PC-9 (cell line): ENCODE measurements at regions of chr1 and their contacts with region 1.

Region 1: DNA sequence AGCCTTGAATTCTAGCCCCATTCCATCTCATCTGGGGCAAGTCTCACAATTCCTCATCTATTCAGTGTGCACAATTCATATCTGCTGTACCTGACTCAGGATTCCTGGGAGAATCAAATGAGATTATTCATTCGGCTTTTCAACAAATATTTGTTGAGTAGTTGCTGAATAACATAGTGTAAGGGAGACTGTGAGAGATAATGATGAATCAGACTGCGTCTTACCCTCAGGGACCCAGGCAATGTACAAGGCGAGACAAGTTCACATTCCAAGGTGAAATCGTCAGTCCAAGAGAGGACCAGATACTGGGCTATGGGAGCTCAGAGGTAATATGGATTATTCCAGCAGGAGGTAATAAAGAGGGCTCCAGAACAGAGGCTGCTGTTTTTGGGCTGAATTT is 67.8 kb upstream of the SMYD2 start:
- DNase-seq: peak; percentile 18 to 87
- H3K4me3 ChIP-seq: no peak overlapping the region
- H3K27ac ChIP-seq: peak overlapping the region; percentile 15; the same call in 1 of the 2 replicates
- H3K4me1 ChIP-seq: peaks cover 56% of the 10 kb centered on the region
- H3K27me3 ChIP-seq: no peaks in the 10 kb centered on the region
- CTCF ChIP-seq: no peak

Region 2: GRCh38 chr1:213075725-213076124 is 1137.4 kb before region 1 on chr1:
- CTCF ChIA-PET with region 1: no interaction called
- POLR2A ChIA-PET with region 1: no interaction called
- intact Hi-C with region 1: no loop called
- DNase-seq: no peak
- H3K4me3 ChIP-seq: no peak overlapping the region
- H3K27ac ChIP-seq: no peak overlapping the region
- H3K4me1 ChIP-seq: no peaks in the 10 kb centered on the region
- H3K27me3 ChIP-seq: no peaks in the 10 kb centered on the region
- CTCF ChIP-seq: no peak

Region 3: DNA sequence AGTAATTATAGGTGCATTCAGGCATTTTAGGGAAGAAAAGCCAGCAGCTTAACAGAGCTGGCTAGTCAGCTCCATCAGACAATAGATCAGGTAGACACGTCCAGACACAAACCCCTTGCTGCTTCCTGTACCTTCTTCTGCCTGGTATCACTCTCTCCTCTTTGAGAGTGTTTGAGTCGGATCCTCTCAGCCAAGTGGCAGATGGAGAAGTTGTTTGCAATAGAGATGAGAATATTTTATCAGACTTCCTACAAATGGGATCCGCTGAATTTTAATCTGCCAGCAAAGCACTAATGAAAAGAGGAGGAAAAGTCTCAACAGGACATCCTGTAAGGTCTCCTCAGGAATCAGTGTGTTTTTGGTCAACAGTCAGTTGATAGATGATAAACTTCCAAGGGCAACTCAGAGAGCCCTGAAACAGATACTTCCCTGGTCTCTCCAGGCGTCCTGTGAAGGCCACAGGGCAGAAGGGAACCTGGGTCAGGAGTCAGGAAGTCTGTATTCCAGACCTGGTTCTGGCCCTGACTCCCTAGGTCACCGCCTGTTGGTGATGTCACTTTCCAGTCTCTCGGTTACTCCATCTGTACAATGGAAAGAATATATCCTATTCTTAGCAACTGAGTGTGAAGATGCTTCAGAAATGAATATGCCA is 287.5 kb before region 1 on chr1:
- CTCF ChIA-PET with region 1: no interaction called
- POLR2A ChIA-PET with region 1: no interaction called
- intact Hi-C with region 1: no loop called
- DNase-seq: no peak
- H3K4me3 ChIP-seq: no peak overlapping the region
- H3K27ac ChIP-seq: no peak overlapping the region
- H3K4me1 ChIP-seq: no peaks in the 10 kb centered on the region
- H3K27me3 ChIP-seq: no peaks in the 10 kb centered on the region; the same call in 1 of the 2 replicates
- CTCF ChIP-seq: no peak

Region 4: DNA sequence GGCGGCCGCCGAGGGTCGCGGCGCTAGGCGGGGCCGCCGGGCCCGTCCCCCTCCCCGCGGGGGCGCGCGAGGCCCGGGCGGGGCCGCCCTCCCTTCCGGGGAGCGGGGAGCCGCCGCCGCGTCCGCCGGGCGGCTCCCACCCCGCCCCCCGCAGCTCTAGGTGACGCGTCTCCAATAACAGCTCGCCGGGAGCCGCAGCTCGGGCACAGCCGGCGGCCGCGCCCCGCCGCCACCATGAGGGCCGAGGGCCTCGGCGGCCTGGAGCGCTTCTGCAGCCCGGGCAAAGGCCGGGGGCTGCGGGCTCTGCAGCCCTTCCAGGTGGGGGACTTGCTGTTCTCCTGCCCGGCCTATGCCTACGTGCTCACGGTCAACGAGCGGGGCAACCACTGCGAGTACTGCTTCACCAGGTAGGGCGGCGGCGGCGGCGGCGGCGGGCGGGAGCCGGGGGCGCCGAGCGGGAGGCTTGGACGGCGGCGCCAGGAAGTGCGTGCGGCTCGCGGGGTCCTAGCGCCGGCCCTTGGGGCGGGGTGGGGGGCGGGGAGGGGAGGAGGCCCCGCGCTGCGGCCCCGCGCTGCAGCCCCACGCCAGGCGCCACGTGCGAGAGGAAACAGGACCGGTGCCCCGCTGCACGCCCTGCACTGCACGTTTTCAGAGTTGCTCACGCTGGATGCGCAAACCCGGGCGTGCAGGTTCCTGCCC is 68.0 kb after region 1 on chr1 and contains the start of gene SMYD2:
- CTCF ChIA-PET with region 1: no interaction called
- POLR2A ChIA-PET with region 1: no interaction called
- intact Hi-C with region 1: loop called (anchors 2 kb)
- DNase-seq: peak; percentile 51 to 75
- H3K4me3 ChIP-seq: peak within 1 kb of the TSS; percentile 81
- H3K27ac ChIP-seq: peak within 1 kb of the TSS; percentile 71
- H3K4me1 ChIP-seq: peaks cover 33% of the 10 kb centered on the region
- H3K27me3 ChIP-seq: no peaks in the 10 kb centered on the region
- CTCF ChIP-seq: no peak
- total RNA-seq, gene SMYD2: 36.4 and 41.2 TPM in 2 replicates

Region 5: DNA sequence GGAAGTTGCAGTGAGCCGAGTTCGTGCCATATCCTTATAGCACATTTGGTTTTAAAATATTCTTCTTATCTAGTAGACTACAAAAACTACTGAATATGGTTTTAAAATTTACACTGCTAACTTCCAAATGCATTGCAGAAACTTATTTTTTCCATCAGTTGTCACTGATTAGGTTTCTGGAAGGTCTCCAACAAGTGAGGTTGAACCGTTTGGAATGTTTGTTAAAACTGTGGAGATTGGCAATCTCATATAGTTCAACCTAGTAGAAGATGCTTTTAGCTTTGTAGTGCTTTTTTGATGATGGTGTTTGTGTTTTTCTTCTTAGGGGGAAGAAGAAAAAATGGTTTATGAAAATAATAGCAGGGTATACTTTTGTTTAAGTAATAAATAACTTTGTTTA is 402.7 kb after region 1 on chr1:
- CTCF ChIA-PET with region 1: interaction called, 4 read pairs
- POLR2A ChIA-PET with region 1: interaction called, 10 read pairs
- intact Hi-C with region 1: no loop called
- DNase-seq: no peak
- H3K4me3 ChIP-seq: no peak overlapping the region
- H3K27ac ChIP-seq: no peak overlapping the region
- H3K4me1 ChIP-seq: no peaks in the 10 kb centered on the region
- H3K27me3 ChIP-seq: no peaks in the 10 kb centered on the region
- CTCF ChIP-seq: no peak

Region 6: GRCh38 chr1:214747050-214747615 is 534.0 kb after region 1 on chr1:
- CTCF ChIA-PET with region 1: interaction called, 11 read pairs
- POLR2A ChIA-PET with region 1: no interaction called
- intact Hi-C with region 1: no loop called
- DNase-seq: no peak
- H3K4me3 ChIP-seq: no peak overlapping the region
- H3K27ac ChIP-seq: no peak overlapping the region
- H3K4me1 ChIP-seq: no peaks in the 10 kb centered on the region
- H3K27me3 ChIP-seq: no peaks in the 10 kb centered on the region
- CTCF ChIP-seq: no peak

Region 7: GRCh38 chr1:215146341-215146826 is 933.2 kb after region 1 on chr1:
- CTCF ChIA-PET with region 1: no interaction called
- POLR2A ChIA-PET with region 1: no interaction called
- intact Hi-C with region 1: loop called (anchors 10 kb)
- DNase-seq: peak; percentile 19 to 57
- H3K4me3 ChIP-seq: no peak overlapping the region
- H3K27ac ChIP-seq: no peak overlapping the region
- H3K4me1 ChIP-seq: no peaks in the 10 kb centered on the region; the same call in 1 of the 2 replicates
- H3K27me3 ChIP-seq: no peaks in the 10 kb centered on the region
- CTCF ChIP-seq: peak; percentile 67

Region 8: GRCh38 chr1:215776336-215776735 is 1563.2 kb after region 1 on chr1:
- CTCF ChIA-PET with region 1: no interaction called
- POLR2A ChIA-PET with region 1: no interaction called
- intact Hi-C with region 1: no loop called
- DNase-seq: no peak
- H3K4me3 ChIP-seq: no peak overlapping the region
- H3K27ac ChIP-seq: no peak overlapping the region
- H3K4me1 ChIP-seq: no peaks in the 10 kb centered on the region
- H3K27me3 ChIP-seq: no peaks in the 10 kb centered on the region
- CTCF ChIP-seq: no peak